Activated CD4-positive, alpha-beta T cell treated with anti-CD3 and anti-CD28 coated beads, Interleukin-2, amount 10 ng/mL, durations not matched to agents 7 days and 5 days (primary cell): ENCODE measurements at regions of chr2 and their contacts with region 1.

Region 1: GRCh38 chr2:196176142-196176738 is 4.9 kb upstream of the STK17B start:
- DNase-seq: peak; percentile 92
- H3K4me3 Mint-ChIP-seq: peak overlapping the region; percentile 60
- H3K27ac Mint-ChIP-seq: peak overlapping the region; percentile 86
- H3K4me1 Mint-ChIP-seq: peaks cover 72% of the 10 kb centered on the region
- H3K27me3 Mint-ChIP-seq: no peaks in the 10 kb centered on the region

Region 2: GRCh38 chr2:196149948-196150347 is 26.3 kb before region 1 on chr2:
- CTCF ChIA-PET with region 1: no interaction called
- POLR2A ChIA-PET with region 1: no interaction called
- DNase-seq: no peak
- H3K4me3 Mint-ChIP-seq: peak overlapping the region; percentile 23
- H3K27ac Mint-ChIP-seq: peak overlapping the region; percentile 65
- H3K4me1 Mint-ChIP-seq: peaks cover 83% of the 10 kb centered on the region
- H3K27me3 Mint-ChIP-seq: no peaks in the 10 kb centered on the region

Region 3: GRCh38 chr2:196205881-196206435 is 29.7 kb after region 1 on chr2:
- CTCF ChIA-PET with region 1: interaction called, 11 read pairs
- POLR2A ChIA-PET with region 1: no interaction called
- DNase-seq: no peak
- H3K4me3 Mint-ChIP-seq: no peak overlapping the region
- H3K27ac Mint-ChIP-seq: no peak overlapping the region
- H3K4me1 Mint-ChIP-seq: peaks cover 54% of the 10 kb centered on the region
- H3K27me3 Mint-ChIP-seq: no peaks in the 10 kb centered on the region